Activated CD8-positive, alpha-beta memory T cell treated with anti-CD3 and anti-CD28 coated beads, Interleukin-2, amount 10 ng/mL, durations not matched to agents 7 days and 5 days (primary cell): ENCODE measurements at regions of chr1 and their contacts with region 1.

Region 1: GRCh38 chr1:145978854-145979759 is 14.6 kb downstream of the POLR3GL start:
- DNase-seq: peak; percentile 96
- ATAC-seq: peak; percentile 93
- H3K4me3 Mint-ChIP-seq: no peak overlapping the region
- H3K27ac Mint-ChIP-seq: no peak overlapping the region
- H3K4me1 Mint-ChIP-seq: peaks cover 25% of the 10 kb centered on the region
- H3K27me3 Mint-ChIP-seq: no peaks in the 10 kb centered on the region

Region 2: GRCh38 chr1:145740266-145740665 is 238.8 kb before region 1 on chr1:
- CTCF ChIA-PET with region 1: no interaction called
- DNase-seq: no peak
- ATAC-seq: no peak
- H3K4me3 Mint-ChIP-seq: no peak overlapping the region
- H3K27ac Mint-ChIP-seq: no peak overlapping the region
- H3K4me1 Mint-ChIP-seq: no peaks in the 10 kb centered on the region
- H3K27me3 Mint-ChIP-seq: no peaks in the 10 kb centered on the region

Region 3: DNA sequence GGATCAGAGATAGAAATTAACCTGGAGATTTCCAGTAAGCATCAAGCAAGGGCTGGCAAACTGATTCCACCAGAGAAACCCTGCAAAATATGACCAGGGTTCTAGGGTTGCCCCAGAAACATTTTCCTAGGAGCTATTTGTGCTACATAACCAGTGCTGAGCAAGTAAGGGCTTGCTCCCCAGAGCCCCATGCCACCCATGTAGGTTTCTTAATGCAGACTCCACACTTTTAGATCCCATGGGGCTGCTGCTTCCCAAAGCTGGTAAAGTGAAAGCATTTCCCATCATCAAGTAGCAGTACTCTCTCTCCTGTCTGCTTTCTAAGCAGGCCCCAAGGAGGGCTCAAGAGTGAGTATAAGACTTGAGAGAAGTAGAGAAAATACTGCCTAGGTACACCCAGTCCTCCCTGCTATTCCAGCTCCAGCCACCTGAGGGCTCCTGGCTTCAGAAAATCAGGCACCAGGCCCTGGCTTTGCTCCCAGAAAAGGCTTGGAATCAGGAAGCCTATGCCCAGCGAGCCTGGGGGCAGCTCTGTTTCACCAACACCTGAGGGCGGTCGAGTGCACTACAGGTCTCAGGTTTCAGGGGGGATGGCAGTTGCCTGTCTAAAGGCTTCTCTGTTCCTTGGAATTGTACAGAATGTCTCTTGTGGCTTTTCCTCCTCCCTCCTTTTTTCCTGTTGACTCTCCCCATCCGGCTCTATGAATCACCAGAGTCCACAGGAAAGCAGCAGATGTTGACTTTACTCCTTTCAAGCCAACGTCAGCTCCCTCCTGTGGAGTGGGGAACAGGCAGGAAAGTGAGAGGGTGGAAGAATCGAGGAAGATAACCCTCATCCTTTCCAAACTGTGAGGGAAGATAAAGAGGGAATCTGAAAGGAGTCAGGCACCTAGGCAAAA is 87.3 kb before region 1 on chr1:
- CTCF ChIA-PET with region 1: interaction called, 12 read pairs
- DNase-seq: peak; percentile 73
- ATAC-seq: peak; percentile 85
- H3K4me3 Mint-ChIP-seq: no peak overlapping the region
- H3K27ac Mint-ChIP-seq: no peak overlapping the region
- H3K4me1 Mint-ChIP-seq: peaks cover under 1% of the 10 kb centered on the region
- H3K27me3 Mint-ChIP-seq: peaks cover 4% of the 10 kb centered on the region

Region 4: DNA sequence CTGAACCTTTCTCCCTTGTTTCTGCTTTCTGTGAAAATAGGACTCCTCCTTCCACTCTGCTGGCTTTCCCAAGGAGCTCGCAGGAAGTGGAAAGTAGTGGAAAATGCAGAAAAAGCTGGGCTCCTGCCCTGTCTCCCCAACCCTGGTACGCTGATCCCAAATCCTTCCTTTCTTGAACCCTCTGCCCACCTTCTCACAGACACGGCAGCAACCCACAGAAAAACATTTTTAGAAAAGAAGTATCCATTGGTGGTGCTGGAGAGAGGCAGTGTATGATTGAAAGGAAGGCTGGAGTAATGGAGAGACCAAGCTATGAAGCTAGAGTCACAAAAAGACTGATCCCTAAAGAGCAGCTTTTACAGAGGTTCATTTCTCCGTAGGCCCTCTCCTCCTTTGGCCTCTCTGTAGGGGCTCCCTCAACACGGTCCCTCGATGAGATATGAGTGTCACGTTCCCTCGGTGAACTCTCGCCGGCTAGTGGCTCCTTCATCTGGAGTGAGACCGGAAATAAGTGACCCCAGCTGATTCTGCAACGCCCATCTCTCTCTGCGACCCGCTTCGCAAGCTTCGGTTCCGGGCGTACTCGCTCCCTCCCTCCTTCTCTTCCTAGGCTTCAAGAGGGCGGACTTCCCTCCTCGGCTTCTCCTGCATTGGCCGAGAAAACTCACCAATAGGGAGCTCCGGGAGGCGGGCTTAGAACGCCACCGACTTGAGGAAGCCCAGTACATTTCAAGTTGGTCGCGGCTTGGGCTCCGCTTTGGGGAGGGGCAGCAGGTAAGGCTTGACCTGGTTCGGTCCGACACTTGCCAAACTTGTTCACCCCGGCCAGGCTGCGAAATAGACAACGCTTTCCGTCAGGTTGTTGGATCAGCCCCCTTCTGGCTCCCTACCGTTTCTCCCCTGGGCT is 14.9 kb before region 1 on chr1 and contains the starts of genes ANKRD34A and POLR3GL:
- CTCF ChIA-PET with region 1: interaction called, 95 read pairs
- DNase-seq: peak; percentile 97
- ATAC-seq: peak; percentile 93
- H3K4me3 Mint-ChIP-seq: peak within 1 kb of the TSS; percentile 86
- H3K27ac Mint-ChIP-seq: peak within 1 kb of the TSS; percentile 91
- H3K4me1 Mint-ChIP-seq: peaks cover 52% of the 10 kb centered on the region
- H3K27me3 Mint-ChIP-seq: no peaks in the 10 kb centered on the region
- total RNA-seq, gene ANKRD34A: 3.8 to 4.6 TPM
- total RNA-seq, gene POLR3GL: 23.5 to 29.1 TPM

Region 5: DNA sequence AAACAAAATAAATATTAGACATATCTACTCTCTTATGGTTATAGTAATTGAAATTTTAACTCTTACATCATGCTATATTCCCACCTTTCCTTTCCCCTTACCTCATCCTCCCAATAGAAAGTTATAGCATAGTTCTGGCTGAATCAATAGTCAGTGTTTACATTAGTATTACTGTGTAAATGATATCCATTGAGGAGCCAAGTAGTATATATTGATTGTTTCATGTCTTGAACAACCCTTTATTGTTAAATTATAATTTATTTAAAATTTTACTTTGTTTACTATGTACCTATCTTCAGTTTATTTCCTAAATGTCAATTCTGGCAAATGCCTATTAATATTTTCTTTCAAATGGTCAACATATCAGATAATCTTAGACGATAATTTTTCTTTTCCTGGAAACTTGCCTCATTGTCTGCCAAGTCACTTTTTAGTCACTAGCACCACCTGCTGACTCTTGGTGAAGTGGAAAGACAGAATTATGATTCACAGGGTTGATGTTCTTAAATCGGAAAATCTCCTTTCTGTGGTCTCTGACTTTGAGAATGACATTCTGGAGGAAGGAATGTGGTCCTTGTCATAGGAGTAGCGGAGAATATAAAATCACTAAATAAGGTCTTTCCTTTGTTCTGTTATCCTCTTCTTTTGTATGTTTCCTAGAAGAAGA is 33.8 kb after region 1 on chr1:
- CTCF ChIA-PET with region 1: interaction called, 253 read pairs
- DNase-seq: peak; percentile 75
- ATAC-seq: peak; percentile 81
- H3K4me3 Mint-ChIP-seq: no peak overlapping the region
- H3K27ac Mint-ChIP-seq: no peak overlapping the region
- H3K4me1 Mint-ChIP-seq: peaks cover 6% of the 10 kb centered on the region
- H3K27me3 Mint-ChIP-seq: peaks cover 28% of the 10 kb centered on the region

Region 6: DNA sequence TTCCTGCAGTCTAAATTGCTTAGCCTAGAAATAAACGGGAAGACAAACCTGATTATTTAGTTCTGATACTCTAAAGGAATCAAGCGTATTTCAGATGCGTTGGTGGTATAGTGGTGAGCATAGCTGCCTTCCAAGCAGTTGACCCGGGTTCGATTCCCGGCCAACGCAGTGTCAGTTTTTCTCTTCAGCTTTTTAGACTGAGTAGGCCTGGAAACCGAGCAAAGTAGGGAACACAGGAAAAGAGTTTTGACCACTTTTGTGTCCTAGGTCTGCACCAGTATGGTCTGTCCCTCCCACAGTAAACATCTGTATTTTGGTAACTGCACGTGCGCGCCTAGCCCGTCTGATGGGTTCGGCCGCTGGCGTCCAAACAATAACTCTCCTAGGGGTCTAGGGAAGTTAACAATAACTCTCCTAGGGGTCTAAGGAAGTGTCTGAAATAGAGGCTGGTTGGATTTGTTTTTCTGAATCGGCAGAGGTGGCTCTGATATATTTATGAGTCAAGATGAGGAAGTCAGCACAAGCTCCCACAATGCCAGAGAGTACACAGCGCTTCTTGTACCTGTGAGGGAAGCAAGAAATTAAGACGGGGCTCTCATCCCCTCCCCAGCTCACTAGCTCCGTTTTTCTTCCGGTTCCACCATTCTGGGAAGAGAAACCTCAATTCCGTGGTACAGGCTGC is 58.0 kb after region 1 on chr1:
- CTCF ChIA-PET with region 1: interaction called, 64 read pairs
- DNase-seq: peak; percentile 91
- ATAC-seq: peak; percentile 49
- H3K4me3 Mint-ChIP-seq: peak overlapping the region; percentile 88
- H3K27ac Mint-ChIP-seq: peak overlapping the region; percentile 97
- H3K4me1 Mint-ChIP-seq: peaks cover 33% of the 10 kb centered on the region
- H3K27me3 Mint-ChIP-seq: peaks cover 11% of the 10 kb centered on the region